OCI-LY7 (cell line): ENCODE measurements at regions of chr14 and their contacts with region 1.

Region 1: GRCh38 chr14:31207755-31208545 is at the start of gene HECTD1:
- DNase-seq: peak; percentile 90
- H3K4me3 ChIP-seq: peak within 1 kb of the TSS; percentile 96
- H3K27ac ChIP-seq: peak within 1 kb of the TSS; percentile 88
- H3K4me1 ChIP-seq: peaks cover 23% of the 10 kb centered on the region
- CTCF ChIP-seq: peak; percentile 78
- total RNA-seq, gene HECTD1: 90.3 and 119 TPM in 2 replicates

Region 2: DNA sequence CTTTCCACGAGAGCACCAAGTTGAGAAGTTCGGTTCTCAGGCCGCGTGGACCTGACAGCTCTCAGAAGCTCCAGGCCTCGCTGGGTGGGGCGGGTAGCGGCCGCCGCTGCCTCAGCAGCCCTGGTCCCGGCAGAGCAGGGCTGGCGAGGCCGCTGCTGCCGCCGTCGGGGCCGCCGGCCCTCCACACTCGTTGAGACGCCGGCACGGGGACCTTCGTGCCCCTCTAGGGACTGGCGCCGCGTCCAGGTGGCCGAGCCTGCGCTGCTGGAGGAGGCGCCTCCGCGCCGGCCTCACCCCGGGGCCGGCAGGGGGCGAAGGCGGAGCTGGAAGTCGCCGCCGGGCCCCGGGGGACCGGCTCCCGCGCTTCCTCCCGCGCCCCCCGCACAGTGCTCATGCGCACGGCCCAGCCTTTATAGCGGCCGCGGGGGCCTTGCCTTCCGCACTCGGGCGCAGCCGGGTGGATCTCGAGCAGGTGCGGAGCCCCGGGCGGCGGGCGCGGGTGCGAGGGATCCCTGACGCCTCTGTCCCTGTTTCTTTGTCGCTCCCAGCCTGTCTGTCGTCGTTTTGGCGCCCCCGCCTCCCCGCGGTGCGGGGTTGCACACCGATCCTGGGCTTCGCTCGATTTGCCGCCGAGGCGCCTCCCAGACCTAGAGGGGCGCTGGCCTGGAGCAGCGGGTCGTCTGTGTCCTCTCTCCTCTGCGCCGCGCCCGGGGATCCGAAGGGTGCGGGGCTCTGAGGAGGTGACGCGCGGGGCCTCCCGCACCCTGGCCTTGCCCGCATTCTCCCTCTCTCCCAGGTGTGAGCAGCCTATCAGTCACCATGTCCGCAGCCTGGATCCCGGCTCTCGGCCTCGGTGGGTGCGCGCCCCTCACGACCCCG is 333.6 kb before region 1 on chr14 and contains the start of gene COCH:
- CTCF ChIA-PET with region 1: no interaction called
- POLR2A ChIA-PET with region 1: no interaction called
- intact Hi-C with region 1: loop called (anchors 5 kb)
- DNase-seq: peak; percentile 82
- H3K4me3 ChIP-seq: peak within 1 kb of the TSS; percentile 73
- H3K27ac ChIP-seq: no peak within 1 kb of the TSS
- H3K4me1 ChIP-seq: peaks cover 11% of the 10 kb centered on the region
- CTCF ChIP-seq: peak; percentile 70
- total RNA-seq, gene COCH: 11.8 and 18.7 TPM in 2 replicates

Region 3: DNA sequence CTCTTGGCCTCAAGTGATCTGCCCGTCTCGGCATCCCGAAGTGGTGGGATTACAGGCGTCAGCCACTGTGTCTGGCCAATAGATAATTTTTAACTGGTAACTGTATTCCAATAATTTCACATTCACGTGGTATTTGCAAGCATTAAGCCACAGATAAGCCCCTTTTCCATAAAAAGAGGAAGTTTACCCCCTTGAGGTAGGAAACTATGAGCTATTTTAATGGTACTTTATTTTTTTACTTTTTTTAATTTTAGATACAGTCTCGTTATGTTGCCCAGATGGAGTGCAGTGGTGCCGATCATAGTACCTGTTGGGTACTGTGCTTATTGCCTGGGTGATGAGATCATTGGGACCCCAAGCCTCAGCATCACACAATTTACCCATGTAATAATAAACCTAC is 225.4 kb before region 1 on chr14:
- CTCF ChIA-PET with region 1: no interaction called
- POLR2A ChIA-PET with region 1: no interaction called
- intact Hi-C with region 1: loop called (anchors 5 kb)
- DNase-seq: peak; percentile 56
- H3K4me3 ChIP-seq: peak overlapping the region; percentile 41
- H3K27ac ChIP-seq: peak overlapping the region; percentile 64
- H3K4me1 ChIP-seq: peaks cover 45% of the 10 kb centered on the region
- CTCF ChIP-seq: no peak

Region 4: DNA sequence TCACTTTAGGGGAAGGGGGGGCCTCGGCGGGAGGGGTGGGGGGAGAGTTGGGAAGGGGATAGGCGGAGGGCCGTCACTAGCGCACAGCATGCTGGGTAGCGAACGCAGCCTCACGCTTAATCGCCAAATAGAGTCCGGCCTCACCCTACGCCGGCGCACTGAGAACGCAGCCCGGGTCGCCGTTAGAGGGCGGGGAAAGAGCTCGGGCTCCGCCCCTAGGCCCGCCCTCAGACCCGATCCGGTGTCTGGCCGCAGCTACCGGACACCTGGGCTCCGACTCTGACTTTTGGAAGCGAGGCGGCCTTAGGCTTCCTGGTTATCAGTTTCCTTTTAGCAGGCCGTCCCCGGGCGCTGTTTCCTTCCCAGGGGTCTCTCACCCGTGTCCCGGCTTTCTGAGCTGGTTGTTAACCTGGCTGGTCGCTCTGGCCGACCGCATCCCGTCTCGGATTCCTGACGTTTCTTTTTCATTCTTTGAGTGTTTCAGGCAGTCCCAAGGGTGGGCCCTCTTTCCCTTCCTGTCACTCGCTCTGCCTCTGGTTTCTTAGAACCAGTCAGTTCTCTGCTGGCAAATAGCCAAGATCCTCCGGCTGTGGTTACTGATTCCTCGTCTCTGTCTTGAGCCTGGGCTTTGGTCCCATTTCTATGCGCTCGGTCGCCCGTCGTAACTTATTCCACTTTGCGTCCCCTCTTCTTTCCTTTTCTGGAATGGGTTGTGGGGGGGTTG is 181.4 kb before region 1 on chr14:
- CTCF ChIA-PET with region 1: interaction called, 3 read pairs
- POLR2A ChIA-PET with region 1: no interaction called
- intact Hi-C with region 1: loop called (anchors 5 kb)
- DNase-seq: peak; percentile 95
- H3K4me3 ChIP-seq: peak overlapping the region; percentile 98
- H3K27ac ChIP-seq: peak overlapping the region; percentile 76
- H3K4me1 ChIP-seq: peaks cover 25% of the 10 kb centered on the region
- CTCF ChIP-seq: no peak

Region 5: DNA sequence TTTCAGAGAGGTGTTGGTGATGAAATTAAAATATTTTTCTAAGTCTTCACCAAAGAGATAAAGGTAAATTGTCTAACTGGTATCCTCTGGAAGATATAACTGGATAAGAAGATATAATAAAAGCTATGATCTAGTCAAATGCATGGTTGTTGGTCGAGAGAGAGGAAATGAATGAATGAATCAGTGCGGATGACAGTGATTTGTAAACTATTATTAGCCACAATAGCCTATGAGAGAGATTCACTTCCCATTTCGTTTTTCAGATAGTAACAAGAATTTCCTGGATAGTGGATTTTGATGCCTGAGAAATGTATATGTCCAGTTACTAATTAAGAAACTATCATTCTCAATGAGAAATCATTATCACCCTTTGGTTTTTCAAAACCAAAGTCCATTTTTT is 149.3 kb after region 1 on chr14:
- CTCF ChIA-PET with region 1: interaction called, 3 read pairs
- POLR2A ChIA-PET with region 1: interaction called, 3 read pairs
- intact Hi-C with region 1: loop called (anchors 2 kb)
- DNase-seq: no peak
- H3K4me3 ChIP-seq: no peak overlapping the region
- H3K27ac ChIP-seq: no peak overlapping the region
- H3K4me1 ChIP-seq: peaks cover 22% of the 10 kb centered on the region
- CTCF ChIP-seq: no peak

Region 6: DNA sequence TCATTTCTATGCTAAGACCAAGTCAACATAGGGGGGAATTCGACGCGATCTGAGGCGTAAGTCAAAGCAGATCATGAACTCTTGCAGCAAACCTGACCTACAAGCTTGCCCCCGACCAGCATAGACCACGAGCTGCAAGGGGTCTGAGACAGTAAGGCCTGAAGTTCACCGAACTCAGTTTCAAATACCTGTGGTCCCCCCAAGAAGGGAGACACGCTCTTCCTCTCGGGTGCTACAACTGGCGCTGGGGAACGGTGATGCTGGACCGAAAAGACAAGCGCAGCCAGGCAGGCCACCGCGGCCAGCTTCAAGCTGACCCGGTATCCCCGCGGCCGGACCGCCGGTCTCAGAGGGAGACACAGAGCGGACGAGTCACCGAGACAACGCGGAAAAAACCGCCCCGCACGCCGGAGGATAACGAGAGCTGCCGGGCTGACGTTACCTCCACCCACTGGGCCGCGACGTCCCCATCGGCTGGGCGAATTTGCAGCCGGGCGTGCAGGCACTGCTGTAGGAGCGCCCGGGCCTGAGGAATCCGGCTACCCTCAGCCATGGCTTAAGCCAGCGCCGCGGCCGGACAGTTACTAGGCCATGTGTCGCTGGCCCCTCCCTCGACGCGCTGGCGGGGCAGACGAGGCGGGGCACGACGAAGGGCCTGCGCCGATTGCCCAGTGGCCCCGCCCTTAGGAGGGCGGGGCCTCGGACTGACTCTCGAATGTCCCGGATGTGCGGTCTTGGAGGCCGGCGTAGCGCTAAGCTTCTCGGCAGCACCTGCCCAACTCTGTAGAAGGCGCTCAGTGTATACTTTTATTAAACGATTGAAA is 249.1 kb after region 1 on chr14 and contains the start of gene DTD2:
- CTCF ChIA-PET with region 1: no interaction called
- POLR2A ChIA-PET with region 1: interaction called, 5 read pairs
- intact Hi-C with region 1: loop called (anchors 2 kb)
- DNase-seq: peak; percentile 97
- H3K4me3 ChIP-seq: peak within 1 kb of the TSS; percentile 81
- H3K27ac ChIP-seq: peak within 1 kb of the TSS; percentile 56
- H3K4me1 ChIP-seq: peaks cover 17% of the 10 kb centered on the region
- CTCF ChIP-seq: peak; percentile 50
- total RNA-seq, gene DTD2: 48.9 and 61.4 TPM in 2 replicates